GM12878 (cell line): ENCODE measurements at regions of chr17 and their contacts with region 1.

Region 1: GRCh38 chr17:17836250-17836817 is 452 bp downstream of the SREBF1 start:
- DNase-seq: peak; percentile 85
- ATAC-seq: peak; percentile 70
- H3K4me3 ChIP-seq: peak overlapping the region; percentile 79
- H3K27ac ChIP-seq: peak overlapping the region; percentile 78
- H3K4me1 ChIP-seq: peaks cover 50% of the 10 kb centered on the region
- H3K27me3 ChIP-seq: no peaks in the 10 kb centered on the region
- CTCF ChIP-seq: no peak
- EP300 ChIP-seq: no peak
- POLR2A ChIP-seq: peak; percentile 98
- RAD21 ChIP-seq: no peak

Region 2: DNA sequence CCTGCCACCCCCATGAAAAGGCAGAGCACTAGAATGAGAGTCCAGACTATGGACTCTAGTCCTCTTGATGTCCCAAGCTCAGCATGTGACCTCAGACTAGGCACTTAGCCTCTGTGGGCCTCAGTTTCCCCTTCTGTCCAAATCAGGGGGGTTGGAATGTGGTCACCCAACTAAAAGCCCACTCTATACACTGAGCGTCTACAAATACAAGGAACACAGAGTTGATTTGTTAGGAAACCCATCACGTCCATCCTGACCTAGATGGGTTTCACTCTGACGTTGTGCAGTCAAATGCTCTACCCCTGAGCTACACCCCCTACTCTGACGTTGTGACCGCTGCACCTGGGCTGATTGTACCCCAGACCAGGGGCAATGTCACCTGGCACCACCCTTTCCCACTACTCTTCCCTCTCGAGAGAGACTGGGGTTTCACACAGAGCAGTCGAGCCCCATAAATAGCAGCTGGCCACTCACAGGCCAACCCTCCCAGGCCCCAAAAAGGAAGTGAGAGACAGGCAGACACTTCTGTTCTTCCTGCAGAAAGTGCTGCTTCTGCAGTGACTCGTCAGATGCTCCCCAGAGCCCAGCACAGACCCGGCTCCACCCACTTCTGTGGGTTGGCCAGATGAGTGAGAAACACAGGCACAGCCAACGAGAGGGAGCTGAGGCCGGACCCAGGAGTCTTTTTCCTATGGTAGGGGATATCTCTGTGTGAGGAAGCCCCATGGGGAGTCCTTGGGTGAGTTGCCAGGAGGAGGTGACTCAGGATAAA is 848.3 kb before region 1 on chr17:
- CTCF ChIA-PET with region 1: no interaction called
- POLR2A ChIA-PET with region 1: no interaction called
- RAD21 ChIA-PET with region 1: no interaction called
- SMC1A ChIA-PET with region 1: no interaction called
- in situ Hi-C with region 1: no loop called
- intact Hi-C with region 1: loop called (anchors 10 kb)
- DNase-seq: peak; percentile 99
- ATAC-seq: peak; percentile 77
- H3K4me3 ChIP-seq: peak overlapping the region; percentile 62
- H3K27ac ChIP-seq: peak overlapping the region; percentile 96
- H3K4me1 ChIP-seq: peaks cover 65% of the 10 kb centered on the region
- H3K27me3 ChIP-seq: no peaks in the 10 kb centered on the region
- CTCF ChIP-seq: no peak
- EP300 ChIP-seq: peak in 1 of 2 experiments; percentile 95
- POLR2A ChIP-seq: peak; percentile 75; the same call in 1 of the 2 replicates
- RAD21 ChIP-seq: no peak

Region 3: DNA sequence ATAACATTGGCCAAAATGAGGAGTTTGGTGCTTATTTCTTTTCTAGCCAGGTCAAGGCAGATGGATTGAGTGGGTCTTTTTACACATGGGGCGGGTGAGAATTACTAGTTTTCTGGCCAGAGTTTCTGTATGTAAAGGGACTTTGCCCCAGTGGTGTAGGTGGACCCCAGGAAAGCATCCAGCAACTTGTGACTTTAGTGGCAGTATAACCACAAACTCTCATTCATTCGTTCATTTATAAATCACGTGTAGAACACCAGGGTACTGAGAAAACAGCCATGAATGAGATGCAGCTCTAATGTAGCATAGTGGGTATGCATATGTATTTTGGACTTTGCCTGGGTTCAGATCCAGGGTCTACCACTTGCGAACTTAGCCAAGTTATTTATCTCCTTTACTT is 147.0 kb before region 1 on chr17:
- CTCF ChIA-PET with region 1: interaction called, 6 read pairs
- POLR2A ChIA-PET with region 1: interaction called, 21 read pairs
- RAD21 ChIA-PET with region 1: interaction called, 14 read pairs
- SMC1A ChIA-PET with region 1: interaction called, 5 read pairs
- in situ Hi-C with region 1: no loop called
- intact Hi-C with region 1: loop called (anchors 5 kb)
- DNase-seq: no peak
- ATAC-seq: no peak
- H3K4me3 ChIP-seq: 0 out of 2 replicates have a peak overlapping the region, but pooled peaks have one; percentile 3
- H3K27ac ChIP-seq: peak overlapping the region; percentile 77
- H3K4me1 ChIP-seq: peaks cover 72% of the 10 kb centered on the region
- H3K27me3 ChIP-seq: no peaks in the 10 kb centered on the region
- CTCF ChIP-seq: no peak
- EP300 ChIP-seq: no peak
- POLR2A ChIP-seq: no peak
- RAD21 ChIP-seq: no peak

Region 4: DNA sequence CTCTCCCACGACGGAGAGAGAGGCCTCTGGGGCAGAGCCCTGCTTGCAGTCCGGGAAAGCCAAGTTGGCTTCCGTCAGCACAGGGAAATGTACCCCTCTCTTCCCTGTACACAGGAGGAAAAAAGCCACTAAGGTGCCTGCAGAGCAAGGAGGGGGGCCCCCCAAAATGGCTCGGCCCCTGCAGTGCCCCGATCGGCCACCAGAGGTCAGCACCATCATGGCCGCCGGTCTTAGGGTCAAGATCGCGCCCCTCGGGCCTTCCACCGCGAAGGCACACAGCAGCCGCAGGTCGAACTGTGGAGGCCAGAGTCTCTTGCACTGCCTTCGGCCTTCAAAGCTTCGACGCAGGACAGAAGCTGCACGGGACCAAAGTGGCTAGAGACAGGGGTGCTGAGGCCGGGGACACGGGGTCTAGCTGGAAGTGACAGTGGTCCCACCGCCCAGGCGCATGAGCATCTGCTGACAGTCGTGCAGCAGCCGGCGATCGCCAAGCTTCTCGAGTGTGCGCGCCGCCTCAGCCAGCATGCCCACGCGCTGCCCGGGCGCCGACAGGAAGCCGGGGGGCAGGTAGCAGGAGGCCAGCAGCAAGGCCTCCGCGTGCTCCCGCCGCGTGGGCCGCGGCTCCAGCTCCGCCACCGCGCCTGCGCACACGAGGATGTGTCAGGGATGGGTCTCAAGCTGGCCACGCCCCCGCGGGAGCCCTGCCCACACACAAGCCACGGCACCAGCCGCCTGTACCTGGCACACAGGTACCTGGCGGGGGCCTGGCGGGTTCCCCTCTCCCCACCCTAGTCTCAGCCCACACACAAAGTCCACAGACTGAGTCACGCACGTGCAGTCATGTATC is 23.9 kb before region 1 on chr17:
- CTCF ChIA-PET with region 1: interaction called, 12 read pairs
- POLR2A ChIA-PET with region 1: interaction called, 163 read pairs
- RAD21 ChIA-PET with region 1: interaction called, 105 read pairs
- SMC1A ChIA-PET with region 1: interaction called, 17 read pairs
- in situ Hi-C with region 1: no loop called
- intact Hi-C with region 1: no loop called
- DNase-seq: no peak
- ATAC-seq: peak; percentile 77
- H3K4me3 ChIP-seq: no peak overlapping the region
- H3K27ac ChIP-seq: no peak overlapping the region
- H3K4me1 ChIP-seq: peaks cover 8% of the 10 kb centered on the region
- H3K27me3 ChIP-seq: no peaks in the 10 kb centered on the region
- CTCF ChIP-seq: peak; percentile 97 to 99 (median 98); a peak in 5 of 6 replicates
- EP300 ChIP-seq: no peak
- POLR2A ChIP-seq: no peak
- RAD21 ChIP-seq: peak; percentile 74

Region 5: DNA sequence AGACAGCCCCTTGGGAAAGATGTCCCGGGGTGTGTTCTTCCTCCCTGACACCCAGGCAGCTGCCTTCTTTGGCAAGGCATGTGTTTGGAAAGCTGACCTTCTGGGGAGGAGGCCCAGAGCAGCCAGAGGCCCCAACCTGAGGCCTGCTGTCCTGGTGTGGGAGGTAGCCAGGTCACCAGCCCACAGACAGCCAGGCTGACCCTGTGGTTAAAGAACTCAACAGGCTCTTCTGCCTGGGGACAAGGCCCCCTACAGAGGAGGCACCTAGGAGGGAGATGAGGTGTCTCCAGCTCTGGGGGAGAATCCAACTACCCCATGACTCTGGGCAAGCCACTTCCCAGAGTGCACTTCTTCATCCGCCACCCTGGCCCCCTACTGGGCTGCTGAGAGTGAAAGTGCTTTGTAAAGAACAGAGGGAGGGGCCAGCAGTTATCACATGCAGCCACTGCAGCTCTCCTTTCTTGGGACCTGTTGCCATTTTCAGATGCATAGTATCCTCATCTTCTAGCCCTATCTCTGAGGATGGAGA is 13.6 kb after region 1 on chr17:
- CTCF ChIA-PET with region 1: interaction called, 11 read pairs
- POLR2A ChIA-PET with region 1: interaction called, 37 read pairs
- RAD21 ChIA-PET with region 1: interaction called, 12 read pairs
- SMC1A ChIA-PET with region 1: interaction called, 28 read pairs
- in situ Hi-C with region 1: no loop called
- intact Hi-C with region 1: no loop called
- DNase-seq: peak; percentile 32
- ATAC-seq: peak; percentile 90
- H3K4me3 ChIP-seq: no peak overlapping the region
- H3K27ac ChIP-seq: peak overlapping the region; percentile 59
- H3K4me1 ChIP-seq: peaks cover 27% of the 10 kb centered on the region
- H3K27me3 ChIP-seq: no peaks in the 10 kb centered on the region
- CTCF ChIP-seq: peak; percentile 13 to 38 (median 24); a peak in 2 of 6 replicates
- EP300 ChIP-seq: no peak
- POLR2A ChIP-seq: peak; percentile 63
- RAD21 ChIP-seq: no peak

Region 6: GRCh38 chr17:17959520-17960361 is 123.4 kb after region 1 on chr17:
- CTCF ChIA-PET with region 1: no interaction called
- POLR2A ChIA-PET with region 1: interaction called, 10 read pairs
- RAD21 ChIA-PET with region 1: interaction called, 6 read pairs
- SMC1A ChIA-PET with region 1: interaction called, 3 read pairs
- in situ Hi-C with region 1: no loop called
- intact Hi-C with region 1: no loop called
- DNase-seq: peak; percentile 68
- ATAC-seq: peak; percentile 85
- H3K4me3 ChIP-seq: peak overlapping the region; percentile 6; the same call in 1 of the 2 replicates
- H3K27ac ChIP-seq: peak overlapping the region; percentile 63
- H3K4me1 ChIP-seq: peaks cover 23% of the 10 kb centered on the region
- H3K27me3 ChIP-seq: no peaks in the 10 kb centered on the region
- CTCF ChIP-seq: no peak
- EP300 ChIP-seq: no peak
- POLR2A ChIP-seq: no peak
- RAD21 ChIP-seq: no peak